ENCODE measurements at regions of chr6 and their contacts with region 1.

Region 1: GRCh38 chr6:157981395-157982296 is at the start of gene SYNJ2:
- DNase-seq: peak; percentile 73
- H3K4me3 ChIP-seq: peak within 1 kb of the TSS; percentile 59 to 91 (median 87)
- H3K27ac ChIP-seq: peak within 1 kb of the TSS; percentile 85
- H3K4me1 ChIP-seq: peaks cover 21% of the 10 kb centered on the region
- H3K27me3 ChIP-seq: no peaks in the 10 kb centered on the region
- CTCF ChIP-seq: peak; percentile 67 to 79
- POLR2A ChIP-seq: peak; percentile 38
- total RNA-seq, gene SYNJ2: 71.8 and 78.2 TPM in 2 replicates

Region 2: DNA sequence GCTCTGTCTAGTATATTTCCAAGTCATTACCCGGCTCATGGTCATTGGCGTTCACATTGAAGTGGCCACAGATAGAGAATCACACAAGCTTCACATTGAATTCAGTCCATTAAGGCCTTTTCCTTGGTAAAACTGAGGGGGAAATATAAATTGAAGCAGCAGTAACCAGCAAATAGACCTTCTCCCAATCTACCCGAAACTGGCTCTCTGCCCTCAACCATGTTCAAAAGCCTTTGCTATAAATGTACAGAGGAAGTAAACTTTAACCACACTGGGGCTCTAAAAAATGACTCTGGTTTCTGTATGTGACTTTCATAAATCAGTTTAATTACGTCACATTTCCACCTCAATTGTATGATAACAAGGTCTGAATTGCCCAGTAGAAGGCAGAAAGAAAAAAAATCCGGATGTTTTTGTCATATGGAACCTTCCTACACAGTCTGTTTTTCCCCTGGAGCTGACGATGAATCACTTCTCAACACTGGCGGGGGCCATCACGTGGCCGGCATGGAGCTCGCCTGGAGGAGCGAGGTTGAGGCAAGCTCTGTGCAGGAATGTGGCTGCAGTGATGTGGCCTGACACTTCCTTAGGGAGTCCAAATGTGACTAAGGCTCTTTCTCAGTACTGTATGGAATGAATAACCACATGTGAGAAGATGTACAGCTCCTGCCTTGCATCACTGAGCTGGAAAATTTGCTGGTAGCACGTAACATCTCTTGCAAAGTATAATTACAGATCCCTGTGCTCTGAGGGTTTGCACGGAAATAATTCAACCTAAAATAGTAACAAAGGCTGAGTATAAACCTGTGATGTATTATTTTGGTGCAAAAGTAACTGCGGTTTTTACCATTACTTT is 217.2 kb before region 1 on chr6:
- CTCF ChIA-PET with region 1: no interaction called
- POLR2A ChIA-PET with region 1: no interaction called
- dilution Hi-C with region 1: no loop called
- intact Hi-C with region 1: loop called (anchors 5 kb)
- DNase-seq: peak; percentile 99
- H3K4me3 ChIP-seq: peak overlapping the region in 1 of 3 experiments; percentile 4
- H3K27ac ChIP-seq: peak overlapping the region; percentile 97
- H3K4me1 ChIP-seq: peaks cover 51% of the 10 kb centered on the region
- H3K27me3 ChIP-seq: no peaks in the 10 kb centered on the region
- CTCF ChIP-seq: no peak
- POLR2A ChIP-seq: no peak

Region 3: DNA sequence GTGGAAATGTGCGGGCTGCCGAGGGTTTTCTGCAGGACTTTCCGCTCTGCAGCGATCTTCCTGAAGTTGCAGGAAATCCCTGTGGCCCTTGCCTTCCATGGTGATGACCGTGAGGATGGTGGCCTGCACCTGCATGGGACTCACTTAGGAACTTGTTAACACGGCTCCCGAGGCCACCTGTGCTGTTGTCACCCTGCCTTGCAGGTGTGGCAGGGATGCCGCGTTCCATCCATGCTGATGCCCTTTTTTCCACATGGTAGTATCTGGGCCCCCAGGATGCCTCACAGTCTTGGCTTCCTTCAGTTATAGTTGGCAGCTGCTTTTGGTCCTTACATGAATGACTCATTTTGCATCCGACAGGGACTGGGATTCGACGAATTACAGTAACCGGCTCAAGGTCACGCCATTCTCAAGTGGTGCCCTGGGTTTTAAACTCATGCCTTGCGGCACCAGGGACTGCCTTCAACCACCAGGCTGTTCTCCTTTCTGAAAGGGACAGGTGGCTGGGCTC is 37.3 kb after region 1 on chr6:
- CTCF ChIA-PET with region 1: interaction called, 22 read pairs
- POLR2A ChIA-PET with region 1: no interaction called
- dilution Hi-C with region 1: no loop called
- intact Hi-C with region 1: no loop called
- DNase-seq: peak; percentile 89
- H3K4me3 ChIP-seq: no peak overlapping the region
- H3K27ac ChIP-seq: peak overlapping the region; percentile 85
- H3K4me1 ChIP-seq: peaks cover 54% of the 10 kb centered on the region
- H3K27me3 ChIP-seq: no peaks in the 10 kb centered on the region
- CTCF ChIP-seq: no peak
- POLR2A ChIP-seq: no peak

Region 4: DNA sequence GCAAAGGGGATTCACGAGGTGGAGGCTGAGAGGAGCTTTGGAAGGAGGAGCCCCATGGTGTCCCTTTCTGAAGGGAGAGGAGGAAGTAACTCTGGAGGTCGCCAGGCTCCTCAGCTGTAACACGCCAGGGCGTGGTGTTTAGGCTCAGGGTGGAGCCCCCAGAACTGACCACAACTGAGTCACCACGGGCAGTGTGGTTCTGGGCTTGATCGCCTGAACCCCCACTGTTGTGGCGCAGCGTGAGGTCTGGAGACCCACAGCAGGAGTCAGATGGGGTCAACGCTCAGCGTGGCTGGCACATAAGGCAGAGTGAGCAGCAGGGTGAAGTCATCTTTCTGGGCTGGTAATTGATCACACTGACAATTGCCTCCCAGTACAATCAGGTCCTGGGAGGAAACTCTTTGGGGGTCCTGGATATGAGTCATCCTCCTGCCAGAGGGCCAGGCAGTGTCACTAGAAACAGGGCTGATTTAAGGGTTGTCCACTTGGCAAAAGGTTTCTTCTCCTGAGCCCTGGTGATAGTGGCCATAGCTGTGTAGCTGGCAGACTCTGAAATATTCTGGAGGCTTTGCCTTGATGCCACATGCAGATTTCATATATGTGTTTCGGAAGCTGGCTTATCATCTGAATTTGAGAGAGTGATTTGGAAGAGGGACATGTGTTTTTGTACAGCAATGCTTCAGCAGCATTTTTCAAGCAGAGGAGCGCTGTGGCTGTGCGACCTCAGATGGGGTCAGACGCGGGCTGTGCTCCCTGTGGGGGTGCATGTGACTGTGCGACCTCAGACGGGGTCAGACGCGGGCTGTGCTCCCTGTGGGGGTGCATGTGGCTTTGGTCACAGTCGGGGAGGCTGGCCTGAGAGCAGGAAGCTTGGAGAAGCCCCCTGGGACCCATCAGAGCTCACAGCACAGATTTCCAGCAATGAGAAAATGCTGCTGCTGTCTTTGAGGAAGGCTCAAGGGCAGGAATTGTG is 50.0 kb after region 1 on chr6:
- CTCF ChIA-PET with region 1: interaction called, 44 read pairs
- POLR2A ChIA-PET with region 1: interaction called, 6 read pairs
- dilution Hi-C with region 1: no loop called
- intact Hi-C with region 1: loop called (anchors 1 kb)
- DNase-seq: peak; percentile 72
- H3K4me3 ChIP-seq: no peak overlapping the region
- H3K27ac ChIP-seq: peak overlapping the region; percentile 78
- H3K4me1 ChIP-seq: peaks cover 28% of the 10 kb centered on the region
- H3K27me3 ChIP-seq: no peaks in the 10 kb centered on the region
- CTCF ChIP-seq: no peak
- POLR2A ChIP-seq: no peak

Region 5: GRCh38 chr6:158060455-158061360 is 79.1 kb after region 1 on chr6:
- CTCF ChIA-PET with region 1: interaction called, 18 read pairs
- POLR2A ChIA-PET with region 1: no interaction called
- dilution Hi-C with region 1: no loop called
- intact Hi-C with region 1: loop called (anchors 1 kb)
- DNase-seq: peak; percentile 92
- H3K4me3 ChIP-seq: no peak overlapping the region
- H3K27ac ChIP-seq: peak overlapping the region; percentile 99
- H3K4me1 ChIP-seq: peaks cover 62% of the 10 kb centered on the region
- H3K27me3 ChIP-seq: no peaks in the 10 kb centered on the region
- CTCF ChIP-seq: no peak
- POLR2A ChIP-seq: no peak

Measured in endothelial cell of umbilical vein (primary cell).